ENCODE measurements at regions of chr10 and their contacts with region 1.

Region 1: DNA sequence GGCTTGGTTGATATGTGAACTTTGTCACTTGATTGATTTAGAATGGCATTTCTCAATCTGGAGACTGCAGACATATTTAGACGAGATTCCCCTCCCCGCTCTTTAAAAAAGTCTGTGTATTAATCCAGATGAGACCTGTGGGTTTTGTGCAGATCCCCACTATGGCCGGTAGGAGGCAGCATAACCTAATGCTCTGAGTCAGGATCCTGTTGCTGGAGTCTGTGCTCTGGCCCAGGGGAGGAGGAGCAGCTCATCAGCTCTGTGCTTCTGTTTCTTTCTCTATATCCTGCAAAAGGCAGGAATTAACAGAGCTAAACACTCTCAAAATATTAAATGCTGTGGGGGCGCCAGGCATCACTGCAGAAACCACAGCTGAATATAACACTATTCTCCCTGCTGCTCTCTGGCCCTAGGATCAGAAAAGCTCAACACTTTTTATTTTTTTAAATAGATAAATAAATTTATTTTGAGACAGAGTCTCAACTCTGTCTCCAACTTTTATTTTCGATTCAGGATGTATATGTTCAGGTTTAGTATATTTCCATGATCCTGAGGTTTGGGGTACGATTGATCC is 23.9 kb upstream of the SEPHS1 start:
- DNase-seq: peak; percentile 57 to 72
- H3K4me3 ChIP-seq: no peak overlapping the region
- H3K27ac ChIP-seq: no peak overlapping the region
- H3K4me1 ChIP-seq: no peaks in the 10 kb centered on the region
- H3K27me3 ChIP-seq: no peaks in the 10 kb centered on the region
- CTCF ChIP-seq: peak; percentile 68 to 96 (median 91)
- EP300 ChIP-seq: no peak
- POLR2A ChIP-seq: no peak
- RAD21 ChIP-seq: peak; percentile 99 to 100

Region 2: DNA sequence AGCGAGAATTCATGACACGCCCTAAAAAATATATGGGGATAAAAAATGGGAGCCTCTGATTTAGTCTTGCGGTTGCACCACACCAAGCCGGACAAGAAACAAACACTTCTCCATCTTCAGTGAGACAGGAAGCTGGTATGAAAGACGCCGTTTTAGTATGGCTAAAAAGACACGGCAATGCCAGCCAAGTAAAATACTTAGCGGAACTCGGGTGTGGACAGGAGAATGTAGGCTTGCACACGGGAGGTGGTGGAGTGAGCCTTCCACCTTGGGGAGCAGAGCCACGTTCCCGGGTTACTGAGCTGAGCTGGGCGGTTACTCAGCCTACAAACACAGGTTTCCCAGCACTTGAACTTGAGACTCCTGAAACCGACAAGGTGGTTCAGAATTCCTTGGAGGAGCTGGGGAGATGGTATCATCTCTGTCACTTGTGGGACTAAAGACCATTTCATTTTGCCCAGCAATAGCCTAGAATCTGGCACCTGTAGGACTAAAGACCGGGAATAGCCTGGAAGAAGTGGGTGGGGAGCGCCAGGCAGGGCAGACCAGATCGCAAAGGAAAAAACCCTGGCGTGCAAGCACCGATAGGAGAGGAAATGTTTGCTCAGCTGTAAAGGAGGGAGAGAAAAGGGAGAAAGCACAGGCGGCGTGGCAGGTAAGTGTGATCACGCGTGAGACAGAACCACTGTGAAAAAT is 10.9 kb after region 1 on chr10:
- CTCF ChIA-PET with region 1: interaction called, 29 read pairs
- POLR2A ChIA-PET with region 1: interaction called, 5 read pairs
- DNase-seq: no peak
- H3K4me3 ChIP-seq: peak overlapping the region; percentile 29 to 60 (median 50)
- H3K27ac ChIP-seq: no peak overlapping the region
- H3K4me1 ChIP-seq: peaks cover 0 to 4% (median under 1%) of the 10 kb centered on the region in 4 experiments; a peak in 4 of 7 replicates
- H3K27me3 ChIP-seq: peaks cover 0 to 10% (median 8%) of the 10 kb centered on the region in 4 experiments; a peak in 3 of 7 replicates
- CTCF ChIP-seq: no peak
- EP300 ChIP-seq: no peak
- POLR2A ChIP-seq: no peak
- RAD21 ChIP-seq: no peak

Region 3: DNA sequence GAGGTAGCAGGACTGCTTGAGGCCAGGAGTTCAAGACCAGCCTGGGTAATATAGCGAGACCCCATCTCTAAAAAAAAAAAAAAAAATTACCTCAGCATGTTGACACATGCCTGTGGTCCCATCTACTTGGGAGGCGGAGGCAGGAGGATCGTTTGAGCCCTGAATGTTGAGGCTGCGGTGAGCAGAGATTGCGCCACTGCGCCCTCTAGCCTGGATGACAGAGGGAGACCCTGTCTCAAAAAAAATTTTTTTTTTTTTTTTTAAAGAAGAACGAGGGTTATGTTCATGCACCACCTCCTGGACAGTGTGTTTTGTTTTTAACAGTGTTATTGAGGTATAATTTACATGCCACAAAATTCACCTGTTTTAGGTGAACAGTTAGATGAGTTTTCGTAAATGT is 27.3 kb after region 1 on chr10:
- CTCF ChIA-PET with region 1: interaction called, 58 read pairs
- POLR2A ChIA-PET with region 1: interaction called, 5 read pairs
- DNase-seq: no peak
- H3K4me3 ChIP-seq: no peak overlapping the region
- H3K27ac ChIP-seq: no peak overlapping the region
- H3K4me1 ChIP-seq: peaks cover 1 to 9% (median 5%) of the 10 kb centered on the region in 4 experiments; a peak in 6 of 7 replicates
- H3K27me3 ChIP-seq: no peaks in the 10 kb centered on the region
- CTCF ChIP-seq: peak in 1 of 3 experiments; percentile 10; a peak in 1 of 4 replicates
- EP300 ChIP-seq: no peak
- POLR2A ChIP-seq: no peak
- RAD21 ChIP-seq: no peak; a peak in 1 of 4 replicates

Region 4: DNA sequence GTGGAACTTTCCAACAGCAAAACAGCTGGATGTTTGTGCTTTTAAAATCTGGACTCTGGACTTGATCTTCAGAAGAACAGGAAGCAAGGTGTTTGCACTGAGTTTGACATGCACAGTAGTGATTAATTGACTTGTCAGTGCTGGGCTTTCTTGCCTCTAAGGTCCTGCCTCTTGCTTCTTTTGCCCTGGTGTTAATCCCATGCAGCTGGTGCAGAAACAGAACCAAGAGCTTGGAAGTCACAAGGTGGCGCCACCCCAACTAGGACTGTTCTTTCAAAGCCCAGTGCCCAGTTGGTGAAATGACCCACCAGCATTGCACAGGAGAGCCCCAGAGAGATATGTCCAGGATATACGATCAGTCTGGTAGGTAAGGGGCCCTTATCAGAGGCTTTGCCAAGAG is 42.9 kb after region 1 on chr10:
- CTCF ChIA-PET with region 1: interaction called, 58 read pairs
- POLR2A ChIA-PET with region 1: interaction called, 3 read pairs
- DNase-seq: peak in 1 of 2 experiments; percentile 77
- H3K4me3 ChIP-seq: no peak overlapping the region
- H3K27ac ChIP-seq: no peak overlapping the region
- H3K4me1 ChIP-seq: no peaks in the 10 kb centered on the region
- H3K27me3 ChIP-seq: no peaks in the 10 kb centered on the region; a peak in 1 of 7 replicates
- CTCF ChIP-seq: peak; percentile 68 to 79 (median 75)
- EP300 ChIP-seq: no peak
- POLR2A ChIP-seq: no peak
- RAD21 ChIP-seq: peak; percentile 56 to 74

Region 5: GRCh38 chr10:13440185-13441061 is 68.4 kb after region 1 on chr10:
- CTCF ChIA-PET with region 1: interaction called, 147 read pairs
- POLR2A ChIA-PET with region 1: interaction called, 4 read pairs
- DNase-seq: peak in 1 of 2 experiments; percentile 91
- H3K4me3 ChIP-seq: peak overlapping the region; percentile 33 to 61 (median 54); a peak in 7 of 8 replicates
- H3K27ac ChIP-seq: no peak overlapping the region
- H3K4me1 ChIP-seq: peaks cover 4 to 7% (median 5%) of the 10 kb centered on the region in 4 experiments; a peak in 6 of 7 replicates
- H3K27me3 ChIP-seq: peaks cover 7 to 23% (median 19%) of the 10 kb centered on the region in 4 experiments
- CTCF ChIP-seq: peak; percentile 85 to 90 (median 89)
- EP300 ChIP-seq: no peak
- POLR2A ChIP-seq: no peak
- RAD21 ChIP-seq: peak; percentile 69 to 81

Region 6: DNA sequence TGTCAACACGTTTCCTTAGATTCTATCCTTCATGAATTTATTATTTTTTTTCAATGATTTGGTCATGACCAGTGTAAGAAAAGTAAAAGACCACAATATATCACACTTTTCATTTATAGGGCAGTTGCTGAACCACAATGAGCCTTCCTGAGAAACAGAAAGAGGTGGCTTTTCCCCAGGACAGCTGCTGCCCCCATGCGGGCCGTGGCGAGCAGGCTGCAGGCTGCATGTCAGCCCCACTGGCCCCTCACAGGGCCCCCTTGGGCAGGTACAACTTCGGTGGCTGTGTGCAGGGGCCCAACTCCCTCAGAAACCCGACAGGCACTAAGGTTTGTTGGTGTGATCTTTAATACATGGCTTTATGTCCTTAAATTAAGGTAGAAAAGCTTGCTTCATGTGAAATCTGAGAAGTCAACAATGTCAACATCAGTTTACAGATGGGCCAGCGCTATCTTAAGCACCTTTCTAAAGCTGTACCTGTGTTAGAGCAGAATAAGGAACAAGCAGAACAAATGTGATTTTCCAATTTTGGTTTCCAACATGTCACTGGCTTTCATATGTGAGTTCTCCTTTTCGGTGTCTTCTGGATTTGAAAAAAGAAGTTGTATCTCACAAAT is 146.2 kb after region 1 on chr10:
- CTCF ChIA-PET with region 1: interaction called, 35 read pairs
- POLR2A ChIA-PET with region 1: no interaction called
- DNase-seq: peak in 1 of 2 experiments; percentile 76
- H3K4me3 ChIP-seq: no peak overlapping the region
- H3K27ac ChIP-seq: no peak overlapping the region
- H3K4me1 ChIP-seq: peaks cover 0 to 3% (median 0%) of the 10 kb centered on the region in 4 experiments; a peak in 1 of 7 replicates
- H3K27me3 ChIP-seq: no peaks in the 10 kb centered on the region
- CTCF ChIP-seq: peak; percentile 77 to 83 (median 81)
- EP300 ChIP-seq: no peak
- POLR2A ChIP-seq: no peak
- RAD21 ChIP-seq: peak; percentile 85 to 89

Region 7: DNA sequence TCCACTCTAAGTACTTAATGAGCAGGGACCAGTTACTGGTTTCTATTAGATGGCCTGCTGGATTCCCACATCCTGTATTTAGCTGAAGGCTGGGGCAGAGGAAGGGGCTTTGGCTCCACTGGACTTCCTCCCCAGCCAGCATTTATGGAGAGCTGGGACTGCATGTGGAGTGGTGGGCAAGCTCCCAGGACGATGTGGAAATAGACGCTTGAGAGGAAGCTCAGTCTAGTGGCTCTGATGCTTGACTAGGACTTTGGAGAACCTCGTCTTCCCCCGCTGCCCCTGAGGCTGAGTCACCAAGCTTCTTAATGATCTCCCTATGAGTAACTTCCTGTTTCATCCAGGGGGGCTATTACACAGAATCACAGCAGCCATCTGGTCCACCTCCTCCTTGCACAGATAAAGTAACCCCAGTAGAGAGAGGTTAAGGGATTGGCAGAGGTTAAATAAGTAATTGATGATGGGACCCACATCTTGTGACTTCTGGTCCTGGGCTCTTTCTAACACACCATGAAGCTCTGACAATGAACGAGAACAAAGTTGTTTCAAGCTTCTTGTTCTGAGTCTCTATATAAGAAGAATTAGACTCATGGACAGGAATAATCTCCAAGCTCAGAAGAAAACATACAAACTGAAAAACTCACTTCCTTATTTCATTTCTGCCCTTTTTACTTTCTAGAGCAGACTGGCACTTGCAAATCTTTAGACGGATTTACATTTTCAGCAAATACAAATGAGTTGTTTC is 341.0 kb after region 1 on chr10:
- CTCF ChIA-PET with region 1: no interaction called
- POLR2A ChIA-PET with region 1: no interaction called
- DNase-seq: no peak
- H3K4me3 ChIP-seq: no peak overlapping the region
- H3K27ac ChIP-seq: no peak overlapping the region
- H3K4me1 ChIP-seq: peaks cover 8 to 20% (median 14%) of the 10 kb centered on the region in 4 experiments
- H3K27me3 ChIP-seq: no peaks in the 10 kb centered on the region
- CTCF ChIP-seq: no peak
- EP300 ChIP-seq: no peak
- POLR2A ChIP-seq: no peak
- RAD21 ChIP-seq: no peak

Measured in H1 (cell line).